ENCODE measurements at regions of chr11 and their contacts with region 1.

Region 1: DNA sequence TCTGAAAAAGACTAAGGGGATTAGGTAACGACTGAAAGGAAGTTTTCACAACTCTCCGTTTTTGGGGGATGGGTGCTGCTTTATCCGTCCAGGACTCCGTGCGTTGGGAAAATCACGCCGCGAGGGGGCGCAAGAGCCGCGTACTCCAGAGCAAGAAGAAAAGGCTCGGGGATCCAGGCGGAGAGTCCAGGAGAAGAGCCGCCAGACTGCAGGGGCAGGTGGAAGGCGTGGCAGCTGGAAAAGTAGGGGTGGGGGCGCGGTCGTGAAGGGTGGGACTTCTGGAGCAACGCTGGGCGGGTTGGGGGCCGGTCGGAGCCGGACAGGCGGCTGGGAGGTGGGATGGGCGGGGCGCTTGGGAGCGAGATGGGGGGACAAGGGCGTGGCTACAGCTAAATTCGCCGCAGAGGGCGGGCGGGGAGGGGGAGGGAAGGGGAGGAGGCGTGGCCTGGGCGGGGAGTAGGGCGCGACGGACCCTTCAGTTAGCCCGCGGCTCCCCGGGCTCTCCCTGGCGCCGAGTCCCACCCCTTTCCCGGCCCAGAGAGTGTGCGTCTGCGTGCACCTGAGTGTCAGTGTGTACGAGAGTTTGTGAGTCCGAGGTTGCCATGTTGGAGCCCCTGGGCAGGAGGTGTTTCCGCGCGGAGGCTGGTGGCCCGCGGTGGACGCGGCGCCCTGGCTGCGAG is 613 bp upstream of the ARHGEF17 start:
- DNase-seq: peak; percentile 95
- ATAC-seq: peak; percentile 70
- H3K4me3 ChIP-seq: peak overlapping the region; percentile 82 to 86 (median 85)
- H3K27ac ChIP-seq: peak overlapping the region; percentile 99
- H3K4me1 ChIP-seq: peaks cover 44% of the 10 kb centered on the region
- H3K27me3 ChIP-seq: peaks cover 0 to 4% of the 10 kb centered on the region in 2 experiments; a peak in 2 of 5 replicates
- CTCF ChIP-seq: peak; percentile 96
- EP300 ChIP-seq: peak in 1 of 2 experiments; percentile 30; a peak in 1 of 4 replicates
- POLR2A ChIP-seq: peak in 1 of 2 experiments; percentile 91; a peak in 2 of 4 replicates
- RAD21 ChIP-seq: peak; percentile 95

Region 2: DNA sequence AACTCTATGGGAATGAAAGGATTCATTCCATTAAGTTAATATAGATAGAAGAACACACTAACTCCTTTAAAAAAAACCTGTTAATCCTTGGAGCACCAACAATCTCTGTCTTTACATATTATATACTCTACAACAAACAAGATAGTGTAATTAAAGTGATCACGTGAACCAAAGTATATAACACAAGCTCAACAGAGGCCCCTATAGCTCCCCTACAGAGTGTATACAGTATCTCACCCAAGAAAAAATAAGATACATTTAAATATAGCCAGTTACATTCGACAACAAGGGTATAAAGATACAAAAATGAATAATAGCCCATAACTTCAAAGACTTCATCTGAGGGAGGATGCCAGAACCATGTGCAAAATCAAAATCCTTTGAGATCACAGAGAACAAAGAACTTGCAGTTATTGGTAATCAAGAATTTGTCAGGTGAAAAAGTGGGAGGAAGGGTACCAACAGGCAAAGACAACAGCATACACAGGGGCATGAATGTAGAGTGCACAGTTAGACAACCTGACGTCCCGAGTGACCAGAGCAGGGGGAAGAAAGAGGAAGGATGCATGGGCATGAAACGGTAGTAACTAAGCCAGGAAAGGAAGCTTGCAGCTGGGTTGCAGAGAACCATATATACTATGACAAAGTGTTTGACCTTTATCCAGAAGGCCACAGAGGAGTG is 170.1 kb before region 1 on chr11:
- CTCF ChIA-PET with region 1: no interaction called
- POLR2A ChIA-PET with region 1: no interaction called
- in situ Hi-C with region 1: no loop called
- intact Hi-C with region 1: no loop called
- DNase-seq: no peak
- ATAC-seq: no peak
- H3K4me3 ChIP-seq: no peak overlapping the region; a peak in 2 of 6 replicates
- H3K27ac ChIP-seq: peak overlapping the region; percentile 2
- H3K4me1 ChIP-seq: peaks cover 51% of the 10 kb centered on the region
- H3K27me3 ChIP-seq: no peaks in the 10 kb centered on the region; a peak in 1 of 5 replicates
- CTCF ChIP-seq: no peak
- EP300 ChIP-seq: no peak
- POLR2A ChIP-seq: no peak
- RAD21 ChIP-seq: no peak

Region 3: DNA sequence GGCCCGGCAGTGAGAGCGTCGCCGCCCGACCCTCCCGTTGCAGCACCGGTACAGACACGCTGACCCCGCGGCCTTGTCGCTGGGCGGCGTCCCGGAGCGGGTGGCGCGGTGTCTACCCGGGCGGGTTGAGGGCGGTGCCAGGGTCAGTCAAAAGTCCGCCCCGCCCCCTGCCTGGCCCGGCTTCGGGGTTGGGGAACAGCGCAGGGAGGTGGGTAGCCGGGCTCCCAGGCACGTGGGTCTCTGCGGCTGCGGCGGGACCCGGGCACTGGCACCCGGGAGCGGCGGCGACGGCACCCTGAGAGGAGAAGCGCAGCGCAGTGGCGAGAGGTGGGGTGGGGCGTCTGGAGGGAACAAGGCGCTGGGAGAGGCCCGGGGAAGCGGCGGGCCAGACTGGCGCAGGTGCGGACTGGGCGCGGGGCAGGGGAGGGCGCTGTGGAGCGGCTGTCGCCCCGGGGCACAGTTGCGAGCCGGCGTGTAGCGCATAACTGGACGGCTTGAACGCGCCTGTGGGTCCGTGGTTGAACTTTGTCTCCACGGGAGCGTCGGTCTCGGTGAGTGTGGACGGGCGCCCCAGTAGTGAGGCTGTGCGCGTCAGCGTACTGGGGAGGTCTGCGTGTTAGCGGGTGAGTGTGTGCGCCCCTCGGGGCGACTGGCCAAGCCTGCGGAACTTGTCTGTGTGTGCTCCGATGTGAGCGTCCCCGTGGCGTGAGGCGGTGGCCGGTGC is 89.2 kb before region 1 on chr11 and contains the start of gene P2RY2:
- CTCF ChIA-PET with region 1: no interaction called
- POLR2A ChIA-PET with region 1: no interaction called
- in situ Hi-C with region 1: no loop called
- intact Hi-C with region 1: no loop called
- DNase-seq: peak; percentile 53
- ATAC-seq: peak; percentile 77
- H3K4me3 ChIP-seq: peak within 1 kb of the TSS; percentile 47 to 68 (median 57)
- H3K27ac ChIP-seq: no peak within 1 kb of the TSS
- H3K4me1 ChIP-seq: peaks cover 66% of the 10 kb centered on the region
- H3K27me3 ChIP-seq: peaks cover 2 to 23% of the 10 kb centered on the region in 2 experiments; a peak in 3 of 5 replicates
- CTCF ChIP-seq: peak; percentile 51
- EP300 ChIP-seq: no peak
- POLR2A ChIP-seq: no peak
- RAD21 ChIP-seq: peak; percentile 66
- total RNA-seq, gene P2RY2: 3.0 and 3.1 TPM in 2 replicates

Region 4: GRCh38 chr11:73342633-73343032 is 35.2 kb after region 1 on chr11:
- CTCF ChIA-PET with region 1: no interaction called
- POLR2A ChIA-PET with region 1: interaction called, 124 read pairs
- in situ Hi-C with region 1: loop called (anchors 5 kb)
- intact Hi-C with region 1: no loop called
- DNase-seq: no peak
- ATAC-seq: no peak
- H3K4me3 ChIP-seq: no peak overlapping the region
- H3K27ac ChIP-seq: no peak overlapping the region
- H3K4me1 ChIP-seq: peaks cover 28% of the 10 kb centered on the region
- H3K27me3 ChIP-seq: no peaks in the 10 kb centered on the region
- CTCF ChIP-seq: no peak
- EP300 ChIP-seq: no peak
- POLR2A ChIP-seq: no peak
- RAD21 ChIP-seq: no peak

Region 5: GRCh38 chr11:73563539-73564200 is 256.2 kb after region 1 on chr11:
- CTCF ChIA-PET with region 1: no interaction called
- POLR2A ChIA-PET with region 1: no interaction called
- in situ Hi-C with region 1: no loop called
- intact Hi-C with region 1: no loop called
- DNase-seq: no peak
- ATAC-seq: no peak
- H3K4me3 ChIP-seq: no peak overlapping the region
- H3K27ac ChIP-seq: no peak overlapping the region
- H3K4me1 ChIP-seq: no peaks in the 10 kb centered on the region
- H3K27me3 ChIP-seq: no peaks in the 10 kb centered on the region
- CTCF ChIP-seq: no peak
- EP300 ChIP-seq: no peak
- POLR2A ChIP-seq: no peak
- RAD21 ChIP-seq: no peak

Measured in HepG2 (cell line).